ENCODE measurements at regions of chr12 and their contacts with region 1.

Region 1: GRCh38 chr12:54024127-54024526 is 4.1 kb upstream of the HOXC6 start:
- DNase-seq: no peak
- H3K4me3 Mint-ChIP-seq: no peak overlapping the region
- H3K27ac Mint-ChIP-seq: no peak overlapping the region
- H3K4me1 Mint-ChIP-seq: peaks cover 18% of the 10 kb centered on the region
- H3K27me3 Mint-ChIP-seq: peaks cover 88% of the 10 kb centered on the region

Region 2: DNA sequence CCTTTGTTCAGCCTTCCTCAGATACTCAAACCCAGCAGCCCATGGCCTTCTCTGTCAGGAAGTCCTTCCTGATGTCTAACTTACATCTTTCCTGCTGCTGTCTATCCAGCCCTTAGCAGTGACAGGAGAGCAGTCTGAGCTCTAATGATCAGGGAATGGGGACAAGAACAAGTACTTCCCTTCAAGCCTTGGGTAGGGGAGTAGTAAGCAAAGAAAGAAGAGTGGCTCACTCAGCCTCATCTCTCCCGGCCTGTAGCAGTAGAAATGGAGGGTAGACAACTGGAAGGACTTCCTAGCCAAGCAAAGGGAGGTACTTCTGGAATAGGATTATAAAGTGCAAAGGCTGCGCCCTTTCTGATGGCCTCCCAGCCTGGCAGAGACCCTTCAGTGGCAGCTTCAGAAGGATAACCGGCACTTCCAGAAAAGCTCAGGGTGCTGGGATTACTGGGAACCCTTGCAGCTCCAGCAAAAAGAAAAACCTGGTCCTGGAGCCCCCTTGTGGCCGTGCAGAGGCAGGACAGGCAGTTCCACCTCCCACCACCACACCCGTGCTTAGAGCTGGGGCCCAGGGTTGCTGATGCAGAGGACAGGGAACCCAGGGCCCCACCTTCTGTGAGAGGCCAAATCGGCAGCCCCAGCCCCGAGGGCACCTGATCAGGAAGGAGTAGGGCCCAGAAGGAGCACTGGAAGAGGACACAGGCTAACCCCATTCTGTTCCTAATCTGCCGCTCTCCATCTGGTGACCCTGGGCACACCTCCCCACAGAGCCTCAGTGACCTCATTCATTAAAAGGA is 177.1 kb after region 1 on chr12:
- CTCF ChIA-PET with region 1: interaction called, 16 read pairs
- POLR2A ChIA-PET with region 1: no interaction called
- DNase-seq: peak; percentile 68
- H3K4me3 Mint-ChIP-seq: no peak overlapping the region
- H3K27ac Mint-ChIP-seq: no peak overlapping the region
- H3K4me1 Mint-ChIP-seq: peaks cover 1% of the 10 kb centered on the region
- H3K27me3 Mint-ChIP-seq: peaks cover 54% of the 10 kb centered on the region